ENCODE measurements at regions of chr14 and their contacts with region 1.

Region 1: DNA sequence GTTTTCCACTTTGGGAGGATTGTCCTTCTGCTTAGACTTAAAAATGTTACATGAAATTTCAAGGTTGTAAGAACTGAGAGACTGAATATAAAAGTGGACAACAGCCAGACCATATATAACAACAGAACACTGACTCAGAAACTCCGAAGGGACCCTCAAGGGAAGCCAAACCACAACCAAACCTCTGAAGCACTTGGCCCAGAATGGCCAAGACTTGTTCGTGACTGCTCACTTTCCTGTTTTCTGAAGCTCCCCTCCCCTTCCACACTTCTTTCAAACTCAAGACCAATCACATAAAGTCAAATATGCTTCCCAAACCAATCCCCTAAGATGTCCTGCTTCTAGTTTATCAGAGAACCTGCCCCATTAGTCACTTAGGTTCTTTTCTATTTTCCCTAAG is 13.7 kb downstream of the OR6J1 start:
- DNase-seq: no peak
- H3K4me3 ChIP-seq: no peak overlapping the region
- H3K27ac ChIP-seq: no peak overlapping the region
- H3K4me1 ChIP-seq: no peaks in the 10 kb centered on the region
- H3K27me3 ChIP-seq: no peaks in the 10 kb centered on the region
- CTCF ChIP-seq: no peak

Region 2: DNA sequence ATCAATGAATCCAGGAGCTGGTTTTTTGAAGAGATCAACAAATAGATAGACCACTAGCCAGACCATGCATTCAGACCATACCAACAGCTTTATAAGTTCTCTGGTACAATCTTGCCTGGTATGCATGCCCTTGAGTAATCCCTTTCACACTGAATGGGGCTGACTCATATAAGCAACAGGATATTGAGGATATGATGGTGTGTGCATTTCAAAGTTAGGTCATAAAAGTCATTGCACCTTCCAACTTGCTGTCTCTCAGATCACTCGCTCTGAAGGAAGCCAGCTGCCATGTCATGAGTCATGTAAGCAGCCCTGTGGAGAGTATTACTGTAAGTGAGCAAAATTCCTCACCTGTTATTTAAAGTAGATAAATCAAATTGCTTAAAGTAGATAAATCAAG is 58.7 kb after region 1 on chr14:
- CTCF ChIA-PET with region 1: no interaction called
- dilution Hi-C with region 1: loop called (anchors 5 kb)
- in situ Hi-C with region 1: no loop called
- intact Hi-C with region 1: no loop called
- DNase-seq: peak; percentile 96
- H3K4me3 ChIP-seq: no peak overlapping the region
- H3K27ac ChIP-seq: no peak overlapping the region
- H3K4me1 ChIP-seq: peaks cover 16% of the 10 kb centered on the region
- H3K27me3 ChIP-seq: no peaks in the 10 kb centered on the region
- CTCF ChIP-seq: no peak